ENCODE measurements at regions of chr5 and their contacts with region 1.

Region 1: GRCh38 chr5:130549884-130550561 is 615.0 kb downstream of the HINT1 start:
- DNase-seq: no peak
- H3K4me3 ChIP-seq: no peak overlapping the region
- H3K4me3 Mint-ChIP-seq: no peak overlapping the region
- H3K27ac Mint-ChIP-seq: no peak overlapping the region
- H3K4me1 ChIP-seq: peaks cover 7% of the 10 kb centered on the region; the same call in 1 of the 2 replicates
- H3K4me1 Mint-ChIP-seq: peaks cover 5% of the 10 kb centered on the region
- H3K27me3 ChIP-seq: no peaks in the 10 kb centered on the region
- H3K27me3 Mint-ChIP-seq: no peaks in the 10 kb centered on the region
- CTCF ChIP-seq: no peak

Region 2: GRCh38 chr5:130198925-130199324 is 351.1 kb before region 1 on chr5:
- CTCF ChIA-PET with region 1: no interaction called
- POLR2A ChIA-PET with region 1: no interaction called
- intact Hi-C with region 1: loop called (anchors 1 kb)
- DNase-seq: peak; percentile 14 to 44
- H3K4me3 ChIP-seq: no peak overlapping the region
- H3K4me3 Mint-ChIP-seq: no peak overlapping the region
- H3K27ac Mint-ChIP-seq: no peak overlapping the region
- H3K4me1 ChIP-seq: no peaks in the 10 kb centered on the region
- H3K4me1 Mint-ChIP-seq: no peaks in the 10 kb centered on the region
- H3K27me3 ChIP-seq: no peaks in the 10 kb centered on the region
- H3K27me3 Mint-ChIP-seq: no peaks in the 10 kb centered on the region
- CTCF ChIP-seq: peak in 1 of 2 experiments; percentile 37

Region 3: GRCh38 chr5:130316971-130317680 is 232.9 kb before region 1 on chr5:
- CTCF ChIA-PET with region 1: no interaction called
- POLR2A ChIA-PET with region 1: no interaction called
- intact Hi-C with region 1: loop called (anchors 1 kb)
- DNase-seq: peak; percentile 82 to 90
- H3K4me3 ChIP-seq: no peak overlapping the region
- H3K4me3 Mint-ChIP-seq: peak overlapping the region; percentile 10
- H3K27ac Mint-ChIP-seq: peak overlapping the region; percentile 61
- H3K4me1 ChIP-seq: peaks cover 20% of the 10 kb centered on the region
- H3K4me1 Mint-ChIP-seq: peaks cover 8% of the 10 kb centered on the region
- H3K27me3 ChIP-seq: no peaks in the 10 kb centered on the region
- H3K27me3 Mint-ChIP-seq: no peaks in the 10 kb centered on the region
- CTCF ChIP-seq: no peak

Region 4: GRCh38 chr5:130720355-130720754 is 170.3 kb after region 1 on chr5:
- CTCF ChIA-PET with region 1: no interaction called
- POLR2A ChIA-PET with region 1: no interaction called
- intact Hi-C with region 1: loop called (anchors 1 kb)
- DNase-seq: peak in 1 of 2 experiments; percentile 56
- H3K4me3 ChIP-seq: no peak overlapping the region
- H3K4me3 Mint-ChIP-seq: no peak overlapping the region
- H3K27ac Mint-ChIP-seq: no peak overlapping the region
- H3K4me1 ChIP-seq: no peaks in the 10 kb centered on the region
- H3K4me1 Mint-ChIP-seq: no peaks in the 10 kb centered on the region
- H3K27me3 ChIP-seq: no peaks in the 10 kb centered on the region
- H3K27me3 Mint-ChIP-seq: no peaks in the 10 kb centered on the region
- CTCF ChIP-seq: peak; percentile 64 to 80

Measured in Caco-2 (cell line).